ENCODE measurements at regions of chr5 and their contacts with region 1.

Region 1: DNA sequence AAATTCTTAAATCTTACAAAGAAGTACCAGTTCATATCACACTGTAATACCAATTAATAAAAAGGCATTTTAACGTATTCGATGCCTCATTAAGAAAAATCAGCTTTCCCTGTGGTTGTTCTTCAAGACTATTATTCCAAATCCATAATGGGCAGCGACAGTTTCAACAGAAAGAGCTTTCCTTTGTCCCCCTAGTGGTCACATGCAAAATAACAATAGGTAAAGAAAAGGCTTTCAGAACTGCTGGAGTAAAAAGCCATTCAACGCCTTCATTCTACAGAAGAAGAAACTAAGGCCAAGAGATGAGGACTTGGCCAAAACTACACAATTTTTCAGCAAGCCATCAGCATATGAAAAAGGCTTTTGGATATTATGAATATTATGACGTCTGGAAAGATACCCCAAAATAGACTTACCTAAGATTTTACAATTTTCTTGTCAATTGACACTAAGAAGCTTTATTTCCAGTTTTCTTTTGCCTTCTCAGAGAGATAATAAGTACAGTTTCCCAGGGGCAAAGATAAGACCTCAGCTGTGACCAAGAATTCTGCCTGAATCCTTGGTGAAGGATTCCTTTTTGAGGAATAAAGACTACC is 6.7 kb upstream of the CDH6 start:
- DNase-seq: peak; percentile 3
- H3K4me3 ChIP-seq: no peak overlapping the region
- H3K27ac ChIP-seq: no peak overlapping the region
- H3K4me1 ChIP-seq: no peaks in the 10 kb centered on the region
- H3K27me3 ChIP-seq: no peaks in the 10 kb centered on the region
- CTCF ChIP-seq: peak; percentile 76 to 77

Region 2: DNA sequence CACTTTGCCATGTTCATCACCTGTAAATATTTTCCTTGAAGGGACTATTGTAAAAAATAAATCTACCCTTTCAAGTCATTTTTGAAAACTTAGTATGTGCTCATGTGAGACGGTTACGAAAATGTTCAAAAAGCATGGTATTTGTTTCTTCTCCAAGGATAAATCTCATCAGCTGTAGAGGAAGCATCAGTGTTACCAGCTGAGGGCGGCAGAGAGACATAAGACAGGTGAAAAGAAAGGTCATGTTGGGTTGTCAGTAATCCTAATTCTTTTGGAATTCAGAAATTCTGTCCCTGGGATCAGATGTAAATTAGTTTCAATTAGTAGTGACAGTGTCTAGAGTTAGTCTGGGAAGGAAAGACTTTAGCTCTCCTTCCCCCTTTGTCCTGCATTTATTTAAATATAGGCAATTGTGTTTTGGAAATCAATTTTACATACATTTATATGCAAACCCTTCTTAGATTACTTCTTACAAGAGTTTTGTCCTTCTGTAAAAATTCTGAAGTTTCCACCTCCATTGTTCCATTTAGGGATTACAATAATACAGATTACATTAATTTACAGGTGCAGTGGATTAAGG is 785.2 kb before region 1 on chr5:
- CTCF ChIA-PET with region 1: no interaction called
- dilution Hi-C with region 1: no loop called
- in situ Hi-C with region 1: no loop called
- intact Hi-C with region 1: loop called (anchors 5 kb)
- DNase-seq: peak; percentile 4
- H3K4me3 ChIP-seq: no peak overlapping the region
- H3K27ac ChIP-seq: no peak overlapping the region
- H3K4me1 ChIP-seq: no peaks in the 10 kb centered on the region
- H3K27me3 ChIP-seq: no peaks in the 10 kb centered on the region
- CTCF ChIP-seq: peak; percentile 43 to 60

Region 3: GRCh38 chr5:31280210-31280609 is 93.4 kb after region 1 on chr5:
- CTCF ChIA-PET with region 1: no interaction called
- dilution Hi-C with region 1: no loop called
- in situ Hi-C with region 1: no loop called
- intact Hi-C with region 1: no loop called
- DNase-seq: peak; percentile 4
- H3K4me3 ChIP-seq: no peak overlapping the region
- H3K27ac ChIP-seq: no peak overlapping the region
- H3K4me1 ChIP-seq: no peaks in the 10 kb centered on the region
- H3K27me3 ChIP-seq: no peaks in the 10 kb centered on the region
- CTCF ChIP-seq: no peak